Activated naive CD4-positive, alpha-beta T cell treated with anti-CD3 and anti-CD28 coated beads for 36 hours (primary cell): ENCODE measurements at regions of chr2 and their contacts with region 1.

Region 1: GRCh38 chr2:74147727-74148456 is at the start of gene BOLA3:
- DNase-seq: peak; percentile 90
- H3K4me3 Mint-ChIP-seq: no peak within 1 kb of the TSS
- H3K27ac Mint-ChIP-seq: no peak within 1 kb of the TSS
- H3K4me1 Mint-ChIP-seq: peaks cover 4% of the 10 kb centered on the region
- H3K27me3 Mint-ChIP-seq: no peaks in the 10 kb centered on the region
- total RNA-seq, gene BOLA3: 103 to 112 TPM

Region 2: GRCh38 chr2:73685770-73686438 is 462.0 kb before region 1 on chr2:
- CTCF ChIA-PET with region 1: interaction called, 5 read pairs
- intact Hi-C with region 1: loop called (anchors 2 kb)
- DNase-seq: no peak
- H3K4me3 Mint-ChIP-seq: no peak overlapping the region
- H3K27ac Mint-ChIP-seq: no peak overlapping the region
- H3K4me1 Mint-ChIP-seq: no peaks in the 10 kb centered on the region
- H3K27me3 Mint-ChIP-seq: no peaks in the 10 kb centered on the region

Region 3: GRCh38 chr2:73907840-73908452 is 239.9 kb before region 1 on chr2:
- CTCF ChIA-PET with region 1: interaction called, 25 read pairs
- intact Hi-C with region 1: loop called (anchors 1 kb)
- DNase-seq: peak; percentile 79
- H3K4me3 Mint-ChIP-seq: no peak overlapping the region
- H3K27ac Mint-ChIP-seq: no peak overlapping the region
- H3K4me1 Mint-ChIP-seq: peaks cover 5% of the 10 kb centered on the region
- H3K27me3 Mint-ChIP-seq: no peaks in the 10 kb centered on the region

Region 4: GRCh38 chr2:73985308-73986084 is 162.4 kb before region 1 on chr2:
- CTCF ChIA-PET with region 1: interaction called, 14 read pairs
- intact Hi-C with region 1: no loop called
- DNase-seq: peak; percentile 77
- H3K4me3 Mint-ChIP-seq: peak overlapping the region; percentile 80
- H3K27ac Mint-ChIP-seq: peak overlapping the region; percentile 90
- H3K4me1 Mint-ChIP-seq: peaks cover 64% of the 10 kb centered on the region
- H3K27me3 Mint-ChIP-seq: no peaks in the 10 kb centered on the region

Region 5: GRCh38 chr2:74119912-74120825 is 27.7 kb before region 1 on chr2:
- CTCF ChIA-PET with region 1: interaction called, 5 read pairs
- intact Hi-C with region 1: loop called (anchors 1 kb)
- DNase-seq: peak; percentile 88
- H3K4me3 Mint-ChIP-seq: peak overlapping the region; percentile 82
- H3K27ac Mint-ChIP-seq: peak overlapping the region; percentile 88
- H3K4me1 Mint-ChIP-seq: peaks cover 12% of the 10 kb centered on the region
- H3K27me3 Mint-ChIP-seq: no peaks in the 10 kb centered on the region

Region 6: GRCh38 chr2:74178201-74179062 is 30.5 kb after region 1 on chr2 and contains the start of gene MOB1A:
- CTCF ChIA-PET with region 1: interaction called, 10 read pairs
- intact Hi-C with region 1: loop called (anchors 1 kb)
- DNase-seq: peak; percentile 99
- H3K4me3 Mint-ChIP-seq: peak within 1 kb of the TSS; percentile 84
- H3K27ac Mint-ChIP-seq: peak within 1 kb of the TSS; percentile 86
- H3K4me1 Mint-ChIP-seq: peaks cover 44% of the 10 kb centered on the region
- H3K27me3 Mint-ChIP-seq: no peaks in the 10 kb centered on the region
- total RNA-seq, gene MOB1A: 129 to 131 TPM

Region 7: GRCh38 chr2:74334931-74335333 is 187.0 kb after region 1 on chr2:
- CTCF ChIA-PET with region 1: interaction called, 3 read pairs
- intact Hi-C with region 1: loop called (anchors 10 kb)
- DNase-seq: peak; percentile 86
- H3K4me3 Mint-ChIP-seq: no peak overlapping the region
- H3K27ac Mint-ChIP-seq: no peak overlapping the region
- H3K4me1 Mint-ChIP-seq: no peaks in the 10 kb centered on the region
- H3K27me3 Mint-ChIP-seq: no peaks in the 10 kb centered on the region

Region 8: DNA sequence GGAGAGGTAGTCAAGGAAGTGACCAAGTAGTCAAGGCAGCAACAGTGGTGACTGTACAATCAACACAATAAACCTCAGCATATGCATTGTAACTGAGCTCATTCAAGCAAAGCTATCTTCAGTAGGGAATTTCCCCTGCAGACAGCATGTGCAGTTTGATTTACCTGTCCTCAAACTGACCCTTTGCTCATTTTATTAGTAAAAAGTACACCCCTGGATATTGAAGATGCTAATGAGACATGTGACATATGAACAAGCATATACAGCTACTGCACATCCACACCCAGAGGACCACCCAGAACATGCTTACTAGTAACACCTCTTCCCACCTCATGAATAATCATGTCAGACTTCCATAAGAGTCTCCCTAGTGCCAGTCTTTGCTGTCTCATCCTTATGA is 258.1 kb after region 1 on chr2:
- CTCF ChIA-PET with region 1: no interaction called
- intact Hi-C with region 1: no loop called
- DNase-seq: no peak
- H3K4me3 Mint-ChIP-seq: no peak overlapping the region
- H3K27ac Mint-ChIP-seq: no peak overlapping the region
- H3K4me1 Mint-ChIP-seq: no peaks in the 10 kb centered on the region
- H3K27me3 Mint-ChIP-seq: no peaks in the 10 kb centered on the region